PC-3 (cell line): ENCODE measurements at regions of chr7 and their contacts with region 1.

Region 1: GRCh38 chr7:15561835-15562234 is at the start of gene AGMO:
- DNase-seq: peak; percentile 32
- ATAC-seq: peak; percentile 62
- H3K4me3 ChIP-seq: no peak within 1 kb of the TSS
- H3K27ac ChIP-seq: no peak within 1 kb of the TSS
- H3K4me1 ChIP-seq: no peaks in the 10 kb centered on the region
- H3K27me3 ChIP-seq: no peaks in the 10 kb centered on the region
- CTCF ChIP-seq: no peak
- total RNA-seq, gene AGMO: 0.11 TPM in 1 of 2 replicates, not detected in the other

Region 2: DNA sequence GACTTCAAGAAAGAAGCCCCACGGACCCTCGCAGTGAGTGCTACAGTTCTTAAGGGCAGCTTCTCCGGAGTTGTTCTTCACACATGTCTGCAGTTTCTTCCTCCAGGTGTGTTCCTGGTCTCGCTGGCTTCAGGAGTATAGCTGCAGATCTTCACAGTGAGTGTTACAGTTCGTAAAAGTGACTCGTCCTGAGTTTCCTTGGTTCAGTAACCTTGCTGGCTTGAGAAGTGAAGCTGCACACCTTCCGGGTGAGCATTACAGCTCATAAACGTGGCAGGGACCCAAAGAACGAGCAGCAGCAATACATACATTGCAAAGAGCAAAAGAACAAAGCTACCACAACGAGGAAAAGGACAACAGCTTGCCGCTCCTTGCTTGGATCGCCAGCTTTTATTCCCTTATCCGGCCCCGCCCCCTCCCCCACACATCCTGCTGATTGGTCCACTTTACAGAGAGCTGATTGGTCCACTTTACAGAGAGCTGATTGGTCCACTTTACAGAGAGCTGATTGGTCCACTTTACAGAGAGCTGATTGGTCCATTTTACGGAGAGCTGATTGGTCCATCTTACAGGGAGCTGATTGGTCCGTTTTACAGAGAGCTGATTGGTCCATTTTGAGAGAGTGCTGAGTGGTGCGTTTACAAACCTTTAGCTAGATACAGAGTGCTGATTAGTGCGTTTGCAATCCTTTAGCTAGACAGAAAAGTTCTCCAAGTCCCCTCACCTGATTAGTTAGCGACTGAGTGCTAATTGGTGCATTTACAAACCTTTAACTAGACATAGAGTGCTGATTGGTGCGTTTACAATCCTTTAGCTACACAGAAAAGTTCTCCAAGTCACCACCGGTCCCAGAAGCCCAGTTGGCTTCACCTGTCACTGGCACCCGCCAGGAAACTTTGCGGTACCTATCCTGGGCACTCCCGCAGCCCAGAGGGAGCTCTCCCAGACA is 165.4 kb before region 1 on chr7:
- CTCF ChIA-PET with region 1: no interaction called
- POLR2A ChIA-PET with region 1: interaction called, 14 read pairs
- intact Hi-C with region 1: no loop called
- DNase-seq: peak; percentile 27
- ATAC-seq: peak; percentile 74
- H3K4me3 ChIP-seq: peak overlapping the region; percentile 50
- H3K27ac ChIP-seq: no peak overlapping the region
- H3K4me1 ChIP-seq: no peaks in the 10 kb centered on the region
- H3K27me3 ChIP-seq: no peaks in the 10 kb centered on the region
- CTCF ChIP-seq: no peak

Region 3: GRCh38 chr7:15546272-15546792 is 15.5 kb before region 1 on chr7:
- CTCF ChIA-PET with region 1: no interaction called
- POLR2A ChIA-PET with region 1: no interaction called
- intact Hi-C with region 1: no loop called
- DNase-seq: no peak
- ATAC-seq: no peak
- H3K4me3 ChIP-seq: no peak overlapping the region
- H3K27ac ChIP-seq: no peak overlapping the region
- H3K4me1 ChIP-seq: no peaks in the 10 kb centered on the region
- H3K27me3 ChIP-seq: no peaks in the 10 kb centered on the region
- CTCF ChIP-seq: no peak